ENCODE measurements at regions of chr13 and their contacts with region 1.

Region 1: GRCh38 chr13:110412132-110412914 is 105.2 kb downstream of the COL4A2 start:
- DNase-seq: peak; percentile 47 to 89
- H3K4me3 ChIP-seq: no peak overlapping the region
- H3K27ac ChIP-seq: no peak overlapping the region
- H3K4me1 ChIP-seq: peaks cover 0 to 4% (median under 1%) of the 10 kb centered on the region in 4 experiments; a peak in 4 of 7 replicates
- H3K27me3 ChIP-seq: no peaks in the 10 kb centered on the region; a peak in 1 of 7 replicates
- CTCF ChIP-seq: peak; percentile 83 to 93 (median 89)
- EP300 ChIP-seq: no peak; a peak in 1 of 3 replicates
- POLR2A ChIP-seq: no peak
- RAD21 ChIP-seq: peak; percentile 90 to 91

Region 2: GRCh38 chr13:110218581-110219201 is 193.6 kb before region 1 on chr13:
- CTCF ChIA-PET with region 1: interaction called, 44 read pairs
- POLR2A ChIA-PET with region 1: no interaction called
- DNase-seq: no peak
- H3K4me3 ChIP-seq: no peak overlapping the region
- H3K27ac ChIP-seq: no peak overlapping the region
- H3K4me1 ChIP-seq: peaks cover 0 to 2% (median 0%) of the 10 kb centered on the region in 4 experiments; a peak in 1 of 7 replicates
- H3K27me3 ChIP-seq: no peaks in the 10 kb centered on the region
- CTCF ChIP-seq: no peak
- EP300 ChIP-seq: no peak
- POLR2A ChIP-seq: no peak
- RAD21 ChIP-seq: no peak

Region 3: GRCh38 chr13:110244071-110244830 is 168.1 kb before region 1 on chr13:
- CTCF ChIA-PET with region 1: interaction called, 13 read pairs
- POLR2A ChIA-PET with region 1: no interaction called
- DNase-seq: peak in 1 of 2 experiments; percentile 35
- H3K4me3 ChIP-seq: no peak overlapping the region
- H3K27ac ChIP-seq: no peak overlapping the region
- H3K4me1 ChIP-seq: peaks cover 0 to 14% (median 2%) of the 10 kb centered on the region in 4 experiments; a peak in 5 of 7 replicates
- H3K27me3 ChIP-seq: no peaks in the 10 kb centered on the region
- CTCF ChIP-seq: no peak
- EP300 ChIP-seq: no peak
- POLR2A ChIP-seq: no peak
- RAD21 ChIP-seq: no peak

Region 4: GRCh38 chr13:110274687-110275086 is 137.6 kb before region 1 on chr13:
- CTCF ChIA-PET with region 1: interaction called, 14 read pairs
- POLR2A ChIA-PET with region 1: no interaction called
- DNase-seq: peak in 1 of 2 experiments; percentile 45
- H3K4me3 ChIP-seq: no peak overlapping the region
- H3K27ac ChIP-seq: no peak overlapping the region
- H3K4me1 ChIP-seq: peaks cover 2 to 5% (median 3%) of the 10 kb centered on the region in 4 experiments; a peak in 1 of 7 replicates
- H3K27me3 ChIP-seq: no peaks in the 10 kb centered on the region; a peak in 1 of 7 replicates
- CTCF ChIP-seq: peak; percentile 35 to 55 (median 43); a peak in 3 of 4 replicates
- EP300 ChIP-seq: no peak
- POLR2A ChIP-seq: no peak
- RAD21 ChIP-seq: peak; percentile 20 to 47; a peak in 3 of 4 replicates

Region 5: GRCh38 chr13:110346661-110347067 is 65.7 kb before region 1 on chr13:
- CTCF ChIA-PET with region 1: interaction called, 11 read pairs
- POLR2A ChIA-PET with region 1: no interaction called
- DNase-seq: no peak
- H3K4me3 ChIP-seq: no peak overlapping the region
- H3K27ac ChIP-seq: no peak overlapping the region
- H3K4me1 ChIP-seq: peaks cover 1 to 7% (median 4%) of the 10 kb centered on the region in 4 experiments; a peak in 5 of 7 replicates
- H3K27me3 ChIP-seq: no peaks in the 10 kb centered on the region
- CTCF ChIP-seq: no peak
- EP300 ChIP-seq: no peak
- POLR2A ChIP-seq: no peak
- RAD21 ChIP-seq: no peak

Region 6: DNA sequence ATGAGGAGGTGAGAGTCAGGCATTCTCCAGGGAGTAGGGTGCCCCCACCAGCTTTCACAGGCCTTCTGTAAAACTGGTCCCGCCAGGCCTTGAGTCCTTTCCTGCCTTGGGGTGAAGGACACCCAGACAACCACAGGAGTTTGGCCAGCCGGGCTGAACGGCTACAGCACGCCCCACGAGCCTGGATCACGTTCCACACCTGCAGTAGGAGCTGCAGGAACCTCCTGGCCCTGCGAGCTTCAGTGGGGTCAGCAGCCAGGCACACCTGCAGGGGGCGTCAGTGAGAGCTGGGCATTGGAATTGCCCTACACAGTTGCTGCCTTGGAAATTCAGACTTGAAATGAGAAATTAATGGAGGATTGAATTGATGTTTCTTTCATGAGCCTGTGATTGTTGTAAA is 59.6 kb before region 1 on chr13:
- CTCF ChIA-PET with region 1: interaction called, 11 read pairs
- POLR2A ChIA-PET with region 1: no interaction called
- DNase-seq: peak in 1 of 2 experiments; percentile 85
- H3K4me3 ChIP-seq: no peak overlapping the region
- H3K27ac ChIP-seq: no peak overlapping the region
- H3K4me1 ChIP-seq: peaks cover 3 to 17% (median 10%) of the 10 kb centered on the region in 4 experiments; a peak in 6 of 7 replicates
- H3K27me3 ChIP-seq: no peaks in the 10 kb centered on the region
- CTCF ChIP-seq: peak; percentile 76 to 94 (median 83)
- EP300 ChIP-seq: no peak
- POLR2A ChIP-seq: no peak
- RAD21 ChIP-seq: peak; percentile 28 to 59; a peak in 3 of 4 replicates

Region 7: GRCh38 chr13:110400786-110401533 is 11.4 kb before region 1 on chr13:
- CTCF ChIA-PET with region 1: interaction called, 28 read pairs
- POLR2A ChIA-PET with region 1: no interaction called
- DNase-seq: no peak
- H3K4me3 ChIP-seq: no peak overlapping the region
- H3K27ac ChIP-seq: no peak overlapping the region
- H3K4me1 ChIP-seq: no peaks in the 10 kb centered on the region
- H3K27me3 ChIP-seq: no peaks in the 10 kb centered on the region
- CTCF ChIP-seq: no peak
- EP300 ChIP-seq: no peak
- POLR2A ChIP-seq: no peak
- RAD21 ChIP-seq: no peak

Region 8: DNA sequence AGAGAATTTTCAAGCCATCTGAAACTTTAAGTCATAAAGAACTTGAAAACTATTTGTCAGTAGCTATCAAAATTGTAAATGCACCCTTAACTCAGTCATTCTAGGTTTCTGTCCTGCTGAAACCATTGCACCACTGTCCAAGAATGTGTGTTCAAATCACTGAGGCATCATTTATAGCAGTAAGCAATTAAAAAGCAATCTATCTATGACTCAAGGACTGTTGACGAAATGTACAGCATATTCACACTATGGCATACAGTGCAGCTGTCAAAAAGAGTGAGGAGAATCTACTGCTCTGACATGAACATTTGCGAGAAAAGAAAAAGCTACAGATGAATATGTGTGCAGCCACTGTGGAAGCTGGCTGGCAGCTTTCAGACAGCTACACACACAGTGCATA is 372.4 kb after region 1 on chr13:
- CTCF ChIA-PET with region 1: no interaction called
- POLR2A ChIA-PET with region 1: no interaction called
- DNase-seq: no peak
- H3K4me3 ChIP-seq: no peak overlapping the region
- H3K27ac ChIP-seq: no peak overlapping the region
- H3K4me1 ChIP-seq: no peaks in the 10 kb centered on the region
- H3K27me3 ChIP-seq: no peaks in the 10 kb centered on the region
- CTCF ChIP-seq: no peak
- EP300 ChIP-seq: no peak
- POLR2A ChIP-seq: no peak
- RAD21 ChIP-seq: no peak